Activated B cell treated with CpG ODN at 0.5 μM for 24 hours (primary cell): ENCODE measurements at regions of chr2 and their contacts with region 1.

Region 1: DNA sequence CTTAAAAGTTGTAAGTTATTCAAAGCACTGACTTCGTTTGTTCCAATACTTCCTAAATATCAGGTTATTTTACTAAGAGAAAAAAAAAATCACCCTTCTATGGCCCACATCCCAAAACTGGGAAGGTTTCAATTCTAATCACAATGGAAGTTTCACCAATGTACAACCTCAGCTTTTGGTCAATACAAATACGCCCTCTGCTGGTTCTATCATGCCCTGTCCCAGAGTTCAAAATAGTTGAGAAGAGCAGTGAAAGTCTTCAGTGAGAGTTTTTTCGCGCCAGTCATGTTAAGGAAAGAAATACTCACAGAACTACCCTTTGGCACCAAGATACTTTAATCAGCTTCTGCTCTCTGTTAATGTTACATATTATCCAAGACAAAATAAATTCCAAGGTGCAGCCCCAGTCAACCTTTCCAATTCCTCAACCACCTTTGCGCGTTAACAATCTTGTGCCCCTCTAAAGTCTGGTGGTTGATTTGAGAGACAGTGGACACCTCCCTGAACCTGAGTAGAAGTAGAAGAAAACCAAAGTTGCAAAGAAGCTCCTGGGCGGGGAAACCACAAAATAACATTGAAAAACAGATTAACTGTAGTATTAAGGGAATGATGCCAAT is 59.9 kb downstream of the SUMO1 start:
- DNase-seq: no peak
- ATAC-seq: peak; percentile 66
- H3K4me3 Mint-ChIP-seq: no peak overlapping the region
- H3K27ac Mint-ChIP-seq: no peak overlapping the region
- H3K4me1 Mint-ChIP-seq: no peaks in the 10 kb centered on the region
- H3K27me3 Mint-ChIP-seq: peaks cover 8% of the 10 kb centered on the region
- CTCF ChIP-seq: peak; percentile 57

Region 2: GRCh38 chr2:200471324-200471848 is 1707.1 kb before region 1 on chr2:
- CTCF ChIA-PET with region 1: no interaction called
- POLR2A ChIA-PET with region 1: no interaction called
- intact Hi-C with region 1: no loop called
- DNase-seq: no peak
- ATAC-seq: peak; percentile 50
- H3K4me3 Mint-ChIP-seq: no peak overlapping the region
- H3K27ac Mint-ChIP-seq: no peak overlapping the region
- H3K4me1 Mint-ChIP-seq: peaks cover 24% of the 10 kb centered on the region
- H3K27me3 Mint-ChIP-seq: no peaks in the 10 kb centered on the region
- CTCF ChIP-seq: no peak

Region 3: GRCh38 chr2:201660293-201660895 is 518.1 kb before region 1 on chr2:
- CTCF ChIA-PET with region 1: no interaction called
- POLR2A ChIA-PET with region 1: no interaction called
- intact Hi-C with region 1: loop called (anchors 1 kb)
- DNase-seq: no peak
- ATAC-seq: no peak
- H3K4me3 Mint-ChIP-seq: no peak overlapping the region
- H3K27ac Mint-ChIP-seq: no peak overlapping the region
- H3K4me1 Mint-ChIP-seq: no peaks in the 10 kb centered on the region
- H3K27me3 Mint-ChIP-seq: peaks cover 13% of the 10 kb centered on the region
- CTCF ChIP-seq: no peak

Region 4: DNA sequence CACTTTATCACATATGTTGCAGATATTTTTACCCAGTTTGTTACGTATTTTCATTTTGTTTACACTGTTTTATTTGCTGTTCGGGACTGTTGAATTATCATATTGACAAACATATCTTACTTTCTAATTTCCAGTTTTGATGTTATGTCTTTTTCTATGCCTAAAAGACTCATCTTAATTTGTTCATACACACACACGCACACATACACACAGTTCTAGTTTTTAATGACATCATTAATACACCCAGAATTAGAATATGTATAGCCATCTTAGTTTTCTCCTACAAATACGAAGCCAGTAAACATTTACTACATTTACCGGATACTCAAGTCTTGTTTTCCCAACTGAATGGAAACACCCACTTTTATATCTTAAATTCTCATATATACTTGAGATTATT is 426.9 kb before region 1 on chr2:
- CTCF ChIA-PET with region 1: interaction called, 3 read pairs
- POLR2A ChIA-PET with region 1: no interaction called
- intact Hi-C with region 1: loop called (anchors 2 kb)
- DNase-seq: no peak
- ATAC-seq: no peak
- H3K4me3 Mint-ChIP-seq: no peak overlapping the region
- H3K27ac Mint-ChIP-seq: no peak overlapping the region
- H3K4me1 Mint-ChIP-seq: no peaks in the 10 kb centered on the region
- H3K27me3 Mint-ChIP-seq: no peaks in the 10 kb centered on the region
- CTCF ChIP-seq: no peak

Region 5: GRCh38 chr2:201860636-201861066 is 317.8 kb before region 1 on chr2:
- CTCF ChIA-PET with region 1: interaction called, 142 read pairs
- POLR2A ChIA-PET with region 1: no interaction called
- intact Hi-C with region 1: loop called (anchors 1 kb)
- DNase-seq: no peak
- ATAC-seq: peak; percentile 65
- H3K4me3 Mint-ChIP-seq: no peak overlapping the region
- H3K27ac Mint-ChIP-seq: no peak overlapping the region
- H3K4me1 Mint-ChIP-seq: peaks cover 8% of the 10 kb centered on the region
- H3K27me3 Mint-ChIP-seq: peaks cover 50% of the 10 kb centered on the region
- CTCF ChIP-seq: peak; percentile 42

Region 6: GRCh38 chr2:202033321-202034248 is 144.9 kb before region 1 on chr2 and contains the start of gene FZD7:
- CTCF ChIA-PET with region 1: no interaction called
- POLR2A ChIA-PET with region 1: no interaction called
- intact Hi-C with region 1: loop called (anchors 2 kb)
- DNase-seq: peak; percentile 79
- ATAC-seq: peak; percentile 87
- H3K4me3 Mint-ChIP-seq: peak within 1 kb of the TSS; percentile 86
- H3K27ac Mint-ChIP-seq: peak within 1 kb of the TSS; percentile 14
- H3K4me1 Mint-ChIP-seq: peaks cover 12% of the 10 kb centered on the region
- H3K27me3 Mint-ChIP-seq: peaks cover 17% of the 10 kb centered on the region
- CTCF ChIP-seq: no peak
- total RNA-seq, gene FZD7: 0.33 and 0.37 TPM in 2 replicates

Region 7: GRCh38 chr2:202736826-202737225 is 558.4 kb after region 1 on chr2:
- CTCF ChIA-PET with region 1: no interaction called
- POLR2A ChIA-PET with region 1: no interaction called
- intact Hi-C with region 1: no loop called
- DNase-seq: no peak
- ATAC-seq: no peak
- H3K4me3 Mint-ChIP-seq: no peak overlapping the region
- H3K27ac Mint-ChIP-seq: no peak overlapping the region
- H3K4me1 Mint-ChIP-seq: peaks cover 1% of the 10 kb centered on the region
- H3K27me3 Mint-ChIP-seq: no peaks in the 10 kb centered on the region
- CTCF ChIP-seq: no peak